Activated naive CD4-positive, alpha-beta T cell treated with anti-CD3 and anti-CD28 coated beads, Interleukin-2, amount 10 ng/mL, durations not matched to agents 7 days and 5 days (primary cell): ENCODE measurements at regions of chr1 and their contacts with region 1.

Region 1: GRCh38 chr1:48776393-48777218 is at the start of gene BEND5:
- DNase-seq: peak; percentile 71
- H3K4me3 Mint-ChIP-seq: peak within 1 kb of the TSS; percentile 91
- H3K27ac Mint-ChIP-seq: peak within 1 kb of the TSS; percentile 57
- H3K4me1 Mint-ChIP-seq: peaks cover 16% of the 10 kb centered on the region
- H3K27me3 Mint-ChIP-seq: peaks cover 27% of the 10 kb centered on the region

Region 2: DNA sequence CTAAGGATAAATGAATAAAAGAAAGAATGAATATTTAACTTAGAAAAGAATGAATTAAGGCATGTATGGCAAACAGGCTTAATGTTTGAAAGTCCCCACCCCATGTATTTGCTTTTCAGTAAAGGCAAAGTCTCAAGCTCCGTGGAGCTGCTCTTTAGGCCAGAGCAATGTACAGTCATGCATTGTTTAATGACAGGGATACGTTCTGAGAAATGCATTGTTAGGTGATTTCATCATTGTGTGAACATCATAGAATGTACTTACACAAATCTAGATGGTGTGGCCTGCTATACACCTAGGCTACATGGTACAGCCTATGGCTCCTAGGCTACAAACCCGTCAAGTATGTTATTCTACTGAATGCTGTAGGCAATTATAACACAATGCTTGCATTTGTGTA is 253.0 kb before region 1 on chr1:
- CTCF ChIA-PET with region 1: no interaction called
- DNase-seq: no peak
- H3K4me3 Mint-ChIP-seq: no peak overlapping the region
- H3K27ac Mint-ChIP-seq: no peak overlapping the region
- H3K4me1 Mint-ChIP-seq: no peaks in the 10 kb centered on the region
- H3K27me3 Mint-ChIP-seq: no peaks in the 10 kb centered on the region

Region 3: DNA sequence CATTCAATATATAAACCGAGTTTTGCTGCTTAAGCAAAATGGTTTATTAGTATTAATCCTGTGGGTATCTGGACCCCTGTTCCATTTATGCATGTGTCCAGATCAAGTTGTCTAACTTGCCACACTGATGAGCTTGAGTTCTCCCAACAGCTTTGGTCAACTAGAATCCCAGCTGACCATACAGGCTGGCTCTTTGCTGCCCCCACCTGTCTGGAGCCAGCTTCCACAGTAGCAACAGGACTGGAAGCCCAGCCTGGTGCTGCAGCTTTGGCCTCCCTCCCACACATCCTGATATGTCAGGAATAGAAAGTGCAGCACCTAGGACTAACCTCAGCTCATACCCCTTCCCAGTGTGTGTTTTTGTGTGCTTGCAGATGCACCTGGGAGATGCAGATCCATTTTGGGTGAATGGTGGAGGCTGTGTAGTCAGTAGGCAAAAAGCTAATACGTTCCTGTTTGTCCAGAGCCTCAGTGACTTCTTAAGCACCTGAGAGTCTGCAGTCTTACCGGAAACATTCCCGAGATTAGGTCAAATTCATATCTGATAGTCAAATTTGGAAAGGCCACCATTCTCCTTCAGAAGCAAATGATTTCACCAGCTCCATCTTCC is 41.0 kb after region 1 on chr1:
- CTCF ChIA-PET with region 1: interaction called, 12 read pairs
- DNase-seq: peak; percentile 35
- H3K4me3 Mint-ChIP-seq: no peak overlapping the region
- H3K27ac Mint-ChIP-seq: no peak overlapping the region
- H3K4me1 Mint-ChIP-seq: no peaks in the 10 kb centered on the region
- H3K27me3 Mint-ChIP-seq: no peaks in the 10 kb centered on the region

Region 4: GRCh38 chr1:48853006-48853405 is 76.4 kb after region 1 on chr1:
- CTCF ChIA-PET with region 1: no interaction called
- DNase-seq: no peak
- H3K4me3 Mint-ChIP-seq: no peak overlapping the region
- H3K27ac Mint-ChIP-seq: no peak overlapping the region
- H3K4me1 Mint-ChIP-seq: no peaks in the 10 kb centered on the region
- H3K27me3 Mint-ChIP-seq: no peaks in the 10 kb centered on the region